ENCODE measurements at regions of chr3 and their contacts with region 1.

Region 1: GRCh38 chr3:135891121-135891520 is 74.4 kb upstream of the PPP2R3A start:
- DNase-seq: no peak
- ATAC-seq: no peak

Region 2: DNA sequence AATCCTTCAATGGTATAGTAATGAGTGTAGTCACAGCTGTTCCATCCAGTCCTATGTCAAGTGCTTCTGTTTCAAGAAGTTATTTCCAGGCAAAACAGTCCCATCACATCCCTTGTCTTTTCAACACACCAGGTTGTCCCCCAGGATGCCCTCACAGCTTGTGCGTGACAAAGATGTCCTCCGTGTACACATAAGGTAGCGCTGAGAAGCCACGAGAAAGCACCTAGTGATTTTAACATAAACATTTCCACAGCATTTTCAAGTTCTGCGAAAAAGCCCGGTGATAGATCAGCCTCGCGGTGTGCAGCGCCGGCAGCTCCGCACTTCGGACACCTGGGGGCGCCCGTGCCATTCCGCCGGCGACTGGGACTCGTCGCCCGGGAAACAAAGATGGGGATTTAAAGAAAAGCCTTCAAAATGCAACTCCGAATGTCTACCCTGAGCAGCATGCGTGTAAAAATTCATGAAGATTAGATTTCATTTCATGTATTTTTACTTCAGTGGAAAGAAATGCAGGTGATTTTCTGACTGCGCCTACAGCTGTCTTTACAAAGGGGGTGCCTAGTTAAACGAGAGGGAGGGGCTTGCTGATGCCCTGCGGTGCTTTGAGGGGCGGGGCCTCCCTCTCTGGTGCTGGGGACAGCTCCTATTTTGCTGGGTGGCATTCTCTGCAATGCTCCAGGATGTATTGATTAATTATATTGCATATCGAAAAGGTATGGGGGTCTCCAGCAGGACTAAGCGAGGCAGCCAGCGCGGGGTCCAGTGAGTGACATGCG is 1290.2 kb before region 1 on chr3:
- intact Hi-C with region 1: loop called (anchors 5 kb)
- DNase-seq: peak; percentile 82
- ATAC-seq: peak; percentile 75